ENCODE measurements at regions of chr4 and their contacts with region 1.

Region 1: GRCh38 chr4:36244257-36245079 is at the start of gene ARAP2:
- DNase-seq: peak; percentile 78
- H3K4me3 Mint-ChIP-seq: peak within 1 kb of the TSS; percentile 95
- H3K27ac Mint-ChIP-seq: peak within 1 kb of the TSS; percentile 92
- H3K4me1 Mint-ChIP-seq: peaks cover 40% of the 10 kb centered on the region
- H3K27me3 Mint-ChIP-seq: peaks cover 5% of the 10 kb centered on the region
- total RNA-seq, gene ARAP2: 70.7 to 76.4 TPM

Region 2: DNA sequence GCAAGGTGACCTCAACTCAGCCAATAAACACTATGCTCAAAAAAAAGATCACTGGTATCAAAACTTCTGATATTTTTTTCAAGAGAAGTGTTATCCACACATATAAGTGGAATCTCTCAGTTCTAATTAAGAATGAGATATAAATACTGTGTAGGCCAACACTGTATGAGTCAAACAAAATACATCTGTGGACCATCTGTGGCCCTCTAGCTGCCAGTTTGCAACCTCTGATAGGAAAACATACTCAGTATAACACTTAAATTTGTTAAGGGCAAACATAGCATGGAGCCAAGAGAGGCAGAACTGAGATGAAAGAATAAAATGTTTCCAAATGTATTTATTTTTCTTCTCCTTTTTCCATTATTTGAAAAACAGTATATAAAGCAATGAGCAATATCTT is 377.4 kb before region 1 on chr4:
- CTCF ChIA-PET with region 1: no interaction called
- POLR2A ChIA-PET with region 1: no interaction called
- DNase-seq: no peak
- H3K4me3 Mint-ChIP-seq: no peak overlapping the region
- H3K27ac Mint-ChIP-seq: no peak overlapping the region
- H3K4me1 Mint-ChIP-seq: no peaks in the 10 kb centered on the region
- H3K27me3 Mint-ChIP-seq: no peaks in the 10 kb centered on the region

Region 3: GRCh38 chr4:36189511-36190226 is 54.8 kb before region 1 on chr4:
- CTCF ChIA-PET with region 1: interaction called, 4 read pairs
- POLR2A ChIA-PET with region 1: interaction called, 18 read pairs
- DNase-seq: peak; percentile 45
- H3K4me3 Mint-ChIP-seq: peak overlapping the region; percentile 23
- H3K27ac Mint-ChIP-seq: peak overlapping the region; percentile 77
- H3K4me1 Mint-ChIP-seq: peaks cover 40% of the 10 kb centered on the region
- H3K27me3 Mint-ChIP-seq: no peaks in the 10 kb centered on the region

Region 4: DNA sequence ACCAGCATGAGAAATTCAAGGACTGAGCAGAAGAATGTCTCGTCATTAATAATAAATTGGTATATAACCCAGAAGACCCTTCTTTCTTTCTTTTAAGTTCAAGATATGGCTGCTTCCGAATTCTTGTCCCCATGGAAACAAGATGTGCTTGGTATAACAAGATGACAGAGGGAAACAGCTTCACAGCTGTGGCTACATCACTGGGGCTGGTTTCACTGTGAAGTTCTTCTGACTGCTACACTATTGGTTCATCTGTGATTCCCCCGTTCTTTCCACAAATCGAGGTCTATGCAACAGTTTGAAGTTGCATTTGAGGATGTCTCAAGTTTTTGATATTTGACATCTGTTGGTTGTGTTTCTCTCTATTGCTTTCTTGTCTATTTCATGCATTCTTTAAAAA is 24.6 kb after region 1 on chr4:
- CTCF ChIA-PET with region 1: no interaction called
- POLR2A ChIA-PET with region 1: interaction called, 22 read pairs
- DNase-seq: no peak
- H3K4me3 Mint-ChIP-seq: no peak overlapping the region
- H3K27ac Mint-ChIP-seq: no peak overlapping the region
- H3K4me1 Mint-ChIP-seq: peaks cover 46% of the 10 kb centered on the region
- H3K27me3 Mint-ChIP-seq: no peaks in the 10 kb centered on the region

Region 5: GRCh38 chr4:36320117-36320896 is 75.8 kb after region 1 on chr4:
- CTCF ChIA-PET with region 1: interaction called, 4 read pairs
- POLR2A ChIA-PET with region 1: interaction called, 15 read pairs
- DNase-seq: no peak
- H3K4me3 Mint-ChIP-seq: no peak overlapping the region
- H3K27ac Mint-ChIP-seq: no peak overlapping the region
- H3K4me1 Mint-ChIP-seq: peaks cover 70% of the 10 kb centered on the region
- H3K27me3 Mint-ChIP-seq: peaks cover 2% of the 10 kb centered on the region

Region 6: DNA sequence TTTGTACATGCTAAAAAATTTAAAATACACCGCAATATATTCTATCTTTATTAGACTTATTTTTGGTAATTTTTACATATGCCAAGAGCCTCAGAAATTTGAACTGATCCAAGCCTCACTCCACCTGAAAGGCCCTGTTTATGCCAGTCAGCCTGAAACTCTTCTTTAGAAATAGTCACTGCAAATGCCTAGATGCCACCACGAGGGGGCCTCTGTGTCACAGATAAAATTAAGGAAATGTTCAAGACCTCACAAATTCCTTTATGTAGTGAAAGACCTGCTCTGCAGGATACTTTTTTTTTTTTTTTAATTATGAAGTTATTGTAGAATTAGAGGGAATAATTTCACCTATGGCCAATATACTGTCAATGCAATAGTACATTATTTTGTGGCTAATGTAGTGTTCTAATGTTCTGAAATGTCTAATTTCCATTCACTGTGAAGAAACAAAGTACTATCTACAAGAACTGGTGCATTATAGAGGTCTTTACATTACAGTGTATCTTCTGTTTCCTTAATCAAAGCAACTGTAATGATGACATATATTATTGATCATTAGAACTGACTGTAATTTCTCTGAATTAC is 106.7 kb after region 1 on chr4:
- CTCF ChIA-PET with region 1: no interaction called
- POLR2A ChIA-PET with region 1: interaction called, 20 read pairs
- DNase-seq: peak; percentile 79
- H3K4me3 Mint-ChIP-seq: no peak overlapping the region
- H3K27ac Mint-ChIP-seq: no peak overlapping the region
- H3K4me1 Mint-ChIP-seq: peaks cover 36% of the 10 kb centered on the region
- H3K27me3 Mint-ChIP-seq: peaks cover 3% of the 10 kb centered on the region

Region 7: GRCh38 chr4:36399762-36400353 is 155.4 kb after region 1 on chr4:
- CTCF ChIA-PET with region 1: interaction called, 13 read pairs
- POLR2A ChIA-PET with region 1: interaction called, 12 read pairs
- DNase-seq: peak; percentile 44
- H3K4me3 Mint-ChIP-seq: no peak overlapping the region
- H3K27ac Mint-ChIP-seq: no peak overlapping the region
- H3K4me1 Mint-ChIP-seq: peaks cover 6% of the 10 kb centered on the region
- H3K27me3 Mint-ChIP-seq: peaks cover 21% of the 10 kb centered on the region

Region 8: DNA sequence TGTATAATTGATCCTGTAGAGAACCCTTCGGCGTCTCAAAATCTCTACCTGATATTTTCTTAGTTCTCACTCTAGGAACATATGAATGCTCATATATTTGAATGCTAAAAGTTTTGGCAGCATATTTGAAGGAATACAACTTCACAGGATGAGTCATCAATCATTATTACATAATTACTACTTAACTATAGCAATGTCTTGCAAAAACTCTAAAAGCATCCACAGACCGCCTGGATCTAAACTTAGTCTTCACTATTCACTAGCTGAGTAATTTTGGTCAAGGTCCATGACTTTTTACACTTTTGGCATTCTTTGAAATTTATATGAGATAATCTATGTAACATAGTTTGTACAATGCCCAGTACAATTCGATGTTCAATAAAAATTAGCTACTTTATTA is 231.7 kb after region 1 on chr4:
- CTCF ChIA-PET with region 1: no interaction called
- POLR2A ChIA-PET with region 1: no interaction called
- DNase-seq: no peak
- H3K4me3 Mint-ChIP-seq: no peak overlapping the region
- H3K27ac Mint-ChIP-seq: no peak overlapping the region
- H3K4me1 Mint-ChIP-seq: no peaks in the 10 kb centered on the region
- H3K27me3 Mint-ChIP-seq: peaks cover 12% of the 10 kb centered on the region

Region 9: GRCh38 chr4:36676139-36677050 is 431.9 kb after region 1 on chr4:
- CTCF ChIA-PET with region 1: no interaction called
- POLR2A ChIA-PET with region 1: no interaction called
- DNase-seq: no peak
- H3K4me3 Mint-ChIP-seq: no peak overlapping the region
- H3K27ac Mint-ChIP-seq: no peak overlapping the region
- H3K4me1 Mint-ChIP-seq: no peaks in the 10 kb centered on the region
- H3K27me3 Mint-ChIP-seq: no peaks in the 10 kb centered on the region

Measured in activated CD4-positive, alpha-beta memory T cell treated with anti-CD3 and anti-CD28 coated beads, Interleukin-2, amount 10 ng/mL, durations not matched to agents 7 days and 5 days (primary cell).